Stomach (tissue), 19 donors: ENCODE measurements at regions of chr22 and their contacts with region 1.

Region 1: GRCh38 chr22:47954115-47954514 is 1191.7 kb downstream of the TBC1D22A start:
- DNase-seq: no peak
- H3K4me3 ChIP-seq: no peak overlapping the region
- H3K27ac ChIP-seq: no peak overlapping the region
- H3K4me1 ChIP-seq: no peaks in the 10 kb centered on the region
- H3K27me3 ChIP-seq: peaks cover 0 to 19% (median 0%) of the 10 kb centered on the region in 3 donors
- CTCF ChIP-seq: no peak
- EP300 ChIP-seq: no peak
- POLR2A ChIP-seq: no peak

Region 2: DNA sequence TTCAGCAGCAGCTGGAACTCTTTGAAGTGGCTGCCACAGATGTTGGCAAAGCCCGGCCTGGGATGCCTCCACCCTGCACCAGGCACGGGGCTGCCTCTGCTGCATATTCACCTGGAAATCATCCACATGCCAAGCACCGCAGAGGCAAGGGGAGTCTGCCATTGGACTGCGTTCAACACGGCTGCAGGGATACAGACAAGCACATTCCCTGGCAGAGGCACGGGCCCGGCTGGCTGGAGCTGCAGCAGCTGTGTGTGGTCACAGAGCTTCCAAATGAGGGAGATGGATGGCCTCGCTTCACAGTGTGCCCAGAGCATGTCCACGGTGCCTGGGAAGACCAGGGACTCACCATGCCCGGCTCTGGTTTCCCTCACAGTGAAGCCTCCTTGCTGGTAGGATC is 187.2 kb after region 1 on chr22:
- intact Hi-C with region 1: no loop called
- DNase-seq: peak in 1 of 2 donors; percentile 65
- H3K4me3 ChIP-seq: no peak overlapping the region
- H3K27ac ChIP-seq: no peak overlapping the region
- H3K4me1 ChIP-seq: no peaks in the 10 kb centered on the region
- H3K27me3 ChIP-seq: peaks cover 0 to 30% (median 0%) of the 10 kb centered on the region in 3 donors
- CTCF ChIP-seq: no peak
- EP300 ChIP-seq: no peak
- POLR2A ChIP-seq: no peak

Region 3: DNA sequence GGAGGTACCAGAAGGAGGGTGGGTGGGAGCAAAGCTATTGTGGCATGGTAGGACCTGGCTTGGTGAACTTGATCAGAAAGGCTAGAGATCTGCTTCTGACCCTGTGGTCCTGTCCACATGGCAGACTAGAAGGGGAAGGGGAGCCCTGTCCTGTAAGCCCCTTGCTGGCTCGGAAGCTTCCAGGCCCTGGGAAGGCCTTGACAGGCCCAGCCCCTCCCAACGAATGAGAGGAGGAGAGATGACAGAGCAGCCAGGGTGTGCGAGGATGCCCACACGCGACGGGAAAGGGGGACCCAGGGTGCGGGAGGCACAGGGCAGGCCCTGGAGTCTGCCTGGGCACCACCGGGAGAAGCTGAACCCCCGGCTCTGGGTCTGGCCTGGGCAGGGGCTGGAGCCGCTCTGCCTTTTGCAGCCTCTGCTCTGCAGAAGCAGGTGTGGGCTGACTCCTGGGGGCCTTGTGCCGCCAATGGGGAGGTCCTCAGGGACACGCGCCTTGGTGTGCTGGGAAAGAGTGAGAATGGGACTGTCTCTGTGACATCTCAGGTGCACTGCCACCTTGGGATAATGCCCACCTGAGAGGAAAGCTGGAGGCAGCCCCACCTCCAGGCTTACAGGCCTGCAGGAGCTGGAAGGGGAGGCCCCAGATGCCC is 426.0 kb after region 1 on chr22:
- intact Hi-C with region 1: loop called (anchors 10 kb)
- DNase-seq: peak in 1 of 2 donors; percentile 20
- H3K4me3 ChIP-seq: no peak overlapping the region
- H3K27ac ChIP-seq: no peak overlapping the region
- H3K4me1 ChIP-seq: no peaks in the 10 kb centered on the region
- H3K27me3 ChIP-seq: peaks cover 0 to 47% (median 3%) of the 10 kb centered on the region in 3 donors
- CTCF ChIP-seq: no peak
- EP300 ChIP-seq: no peak
- POLR2A ChIP-seq: no peak